Natural killer cell (primary cell): ENCODE measurements at regions of chr19 and their contacts with region 1.

Region 1: GRCh38 chr19:2168619-2169424 is 5.1 kb downstream of the DOT1L start:
- DNase-seq: peak; percentile 70 to 86
- ATAC-seq: peak; percentile 68 to 87 (median 74)
- H3K4me3 ChIP-seq: peak overlapping the region; percentile 12
- H3K4me3 Mint-ChIP-seq: peak overlapping the region; percentile 89
- H3K27ac ChIP-seq: peak overlapping the region; percentile 95
- H3K27ac Mint-ChIP-seq: peak overlapping the region; percentile 94 to 98
- H3K4me1 ChIP-seq: peaks cover 75% of the 10 kb centered on the region
- H3K4me1 Mint-ChIP-seq: peaks cover 43 to 59% of the 10 kb centered on the region in 2 donors
- H3K27me3 ChIP-seq: no peaks in the 10 kb centered on the region
- H3K27me3 Mint-ChIP-seq: no peaks in the 10 kb centered on the region
- CTCF ChIP-seq: no peak

Region 2: DNA sequence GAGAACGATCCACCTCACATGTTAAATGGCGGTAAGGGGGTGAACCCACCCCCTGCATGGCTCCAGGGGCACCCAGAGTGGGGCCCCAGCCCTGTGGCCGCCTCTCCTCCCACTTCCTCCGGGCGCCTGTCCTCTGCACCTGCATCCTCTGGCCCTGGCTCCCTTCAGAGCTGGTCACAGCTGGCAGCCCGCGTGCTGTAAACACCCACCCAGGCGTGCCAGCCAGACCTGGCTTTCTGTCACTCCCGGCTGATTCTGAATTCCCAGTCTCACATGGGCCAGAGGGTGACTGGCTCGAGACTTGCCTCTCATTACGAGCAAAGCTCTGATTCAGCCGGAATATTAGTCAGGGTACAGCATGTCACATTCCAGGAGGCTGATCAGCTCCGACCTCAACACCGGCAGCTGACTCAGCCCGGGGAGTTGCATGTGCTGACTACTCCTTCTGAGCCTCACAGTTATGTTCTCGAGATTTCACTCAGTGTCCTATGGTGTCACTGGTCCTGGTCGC is 458.6 kb after region 1 on chr19:
- intact Hi-C with region 1: loop called (anchors 10 kb)
- DNase-seq: peak; percentile 29 to 48
- ATAC-seq: peak; percentile 16 to 49 (median 31)
- H3K4me3 ChIP-seq: no peak overlapping the region
- H3K4me3 Mint-ChIP-seq: no peak overlapping the region
- H3K27ac ChIP-seq: peak overlapping the region; percentile 68
- H3K27ac Mint-ChIP-seq: peak overlapping the region; percentile 93 to 94
- H3K4me1 ChIP-seq: peaks cover 80% of the 10 kb centered on the region
- H3K4me1 Mint-ChIP-seq: peaks cover 49 to 58% of the 10 kb centered on the region in 2 donors
- H3K27me3 ChIP-seq: no peaks in the 10 kb centered on the region
- H3K27me3 Mint-ChIP-seq: no peaks in the 10 kb centered on the region
- CTCF ChIP-seq: no peak